ENCODE measurements at regions of chr13 and their contacts with region 1.

Region 1: DNA sequence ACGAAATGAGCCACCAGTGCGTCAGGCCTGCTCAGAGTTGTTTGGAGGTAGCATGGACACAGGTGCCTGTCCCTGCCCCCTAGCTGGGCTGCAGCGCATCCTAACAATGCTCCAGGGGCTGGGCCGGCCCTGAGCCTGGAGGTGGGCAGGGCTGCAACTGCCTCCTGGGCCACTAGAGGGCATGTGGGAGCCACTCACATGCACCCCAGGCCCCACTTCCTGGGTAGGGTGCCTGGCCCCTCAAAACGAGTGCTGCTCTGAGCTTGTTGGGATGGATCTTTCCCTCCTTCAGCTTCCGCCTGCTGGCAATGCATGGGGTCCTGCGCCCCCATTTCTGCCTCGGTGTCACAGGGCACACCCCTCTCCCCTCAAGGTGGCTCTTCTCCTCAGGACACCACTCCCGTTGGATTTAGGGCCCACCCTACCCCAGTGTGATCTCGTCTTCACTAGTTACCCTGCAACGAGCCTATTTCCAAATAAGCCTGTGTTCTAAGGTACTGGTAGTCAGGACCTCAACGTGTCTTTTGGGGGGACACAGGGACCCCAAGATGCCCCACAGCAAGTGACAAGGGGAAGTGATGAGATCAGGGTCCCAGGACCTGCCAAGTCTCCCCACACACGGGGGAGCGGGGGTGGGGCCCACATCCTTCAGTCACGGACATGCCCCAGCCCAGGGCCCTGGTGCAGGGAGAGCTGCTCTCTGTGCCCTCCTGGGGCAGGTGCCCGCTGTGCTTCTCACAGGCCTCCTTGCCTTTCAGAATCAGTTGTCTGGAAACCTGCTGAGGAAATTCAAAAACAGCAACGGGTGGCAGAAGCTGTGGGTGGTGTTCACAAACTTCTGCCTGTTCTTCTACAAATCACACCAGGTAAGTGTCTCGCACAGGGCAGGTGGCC is 131.3 kb downstream of the STK24 start:
- DNase-seq: peak; percentile 83
- H3K27ac ChIP-seq: peak overlapping the region; percentile 61
- CTCF ChIP-seq: peak; percentile 95

Region 2: GRCh38 chr13:97975848-97976609 is 469.6 kb before region 1 on chr13:
- CTCF ChIA-PET with region 1: no interaction called
- POLR2A ChIA-PET with region 1: no interaction called
- DNase-seq: peak; percentile 92
- H3K27ac ChIP-seq: peak overlapping the region; percentile 87
- CTCF ChIP-seq: no peak

Region 3: GRCh38 chr13:98484289-98485219 is 39.0 kb after region 1 on chr13:
- CTCF ChIA-PET with region 1: interaction called, 10 read pairs
- POLR2A ChIA-PET with region 1: no interaction called
- DNase-seq: peak; percentile 98
- H3K27ac ChIP-seq: peak overlapping the region; percentile 96
- CTCF ChIP-seq: no peak

Region 4: GRCh38 chr13:98653463-98653985 is 207.9 kb after region 1 on chr13:
- CTCF ChIA-PET with region 1: interaction called, 16 read pairs
- POLR2A ChIA-PET with region 1: no interaction called
- DNase-seq: peak; percentile 89
- H3K27ac ChIP-seq: no peak overlapping the region
- CTCF ChIP-seq: peak; percentile 90